ENCODE measurements at regions of chr4 and their contacts with region 1.

Region 1: DNA sequence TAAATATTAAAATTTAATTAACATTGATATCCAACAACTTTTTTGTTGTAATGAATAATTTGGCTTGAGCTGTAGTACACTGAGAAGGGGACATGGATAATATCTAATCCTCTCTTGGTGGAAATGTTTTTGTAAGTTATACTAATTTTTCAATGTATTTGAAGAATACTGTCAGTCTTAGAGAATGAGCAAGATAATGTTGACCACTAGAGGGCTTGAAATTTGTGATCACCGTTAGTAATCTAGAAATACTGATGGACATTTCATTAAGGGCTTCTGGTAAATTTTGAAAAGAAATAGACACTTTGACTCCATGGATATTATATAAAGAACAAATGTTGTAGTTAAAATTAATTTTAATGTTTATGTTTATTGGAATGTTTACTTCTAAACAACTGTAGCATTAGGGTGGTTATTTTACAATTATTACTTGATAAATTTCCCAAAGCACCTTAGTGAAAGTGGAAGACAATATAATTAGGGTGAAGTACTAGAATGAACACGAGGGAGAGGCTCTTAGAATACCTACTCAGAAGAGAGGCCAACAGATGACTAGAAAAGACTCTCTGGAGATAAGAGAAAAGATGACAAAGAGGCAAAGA is 20.0 kb upstream of the CAMK2D start:
- DNase-seq: peak; percentile 58
- H3K4me3 ChIP-seq: no peak overlapping the region
- H3K27ac ChIP-seq: no peak overlapping the region
- H3K4me1 ChIP-seq: peaks cover 19% of the 10 kb centered on the region
- H3K27me3 ChIP-seq: no peaks in the 10 kb centered on the region
- CTCF ChIP-seq: peak; percentile 32 to 40
- POLR2A ChIP-seq: no peak

Region 2: DNA sequence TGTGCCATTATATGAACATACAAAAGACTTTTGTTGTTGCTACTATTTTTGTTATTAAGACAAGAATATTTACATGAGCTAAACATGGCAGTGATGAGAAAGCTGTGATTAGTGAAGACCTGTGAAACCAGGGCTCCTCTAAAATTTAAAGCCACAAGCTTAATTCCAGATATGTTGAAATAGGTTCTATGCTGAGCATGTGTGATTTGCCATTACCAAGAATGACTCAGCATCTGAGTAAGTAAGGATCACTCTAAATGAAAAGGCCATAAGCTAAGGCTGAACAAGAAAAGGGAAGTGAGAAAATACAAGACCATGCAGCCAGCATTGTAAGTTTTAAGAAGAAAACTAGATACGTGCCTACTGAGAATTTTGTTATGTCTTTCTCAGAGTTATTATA is 55.9 kb after region 1 on chr4:
- CTCF ChIA-PET with region 1: interaction called, 6 read pairs
- POLR2A ChIA-PET with region 1: no interaction called
- dilution Hi-C with region 1: no loop called
- intact Hi-C with region 1: loop called (anchors 5 kb)
- DNase-seq: peak; percentile 51
- H3K4me3 ChIP-seq: no peak overlapping the region
- H3K27ac ChIP-seq: no peak overlapping the region
- H3K4me1 ChIP-seq: peaks cover 20% of the 10 kb centered on the region
- H3K27me3 ChIP-seq: no peaks in the 10 kb centered on the region
- CTCF ChIP-seq: no peak
- POLR2A ChIP-seq: no peak

Region 3: GRCh38 chr4:113958766-113959538 is 177.4 kb after region 1 on chr4:
- CTCF ChIA-PET with region 1: interaction called, 3 read pairs
- POLR2A ChIA-PET with region 1: no interaction called
- dilution Hi-C with region 1: no loop called
- intact Hi-C with region 1: loop called (anchors 5 kb)
- DNase-seq: peak; percentile 95
- H3K4me3 ChIP-seq: peak overlapping the region in 2 of 3 experiments; percentile 10 to 83
- H3K27ac ChIP-seq: peak overlapping the region; percentile 89
- H3K4me1 ChIP-seq: peaks cover 69% of the 10 kb centered on the region
- H3K27me3 ChIP-seq: no peaks in the 10 kb centered on the region
- CTCF ChIP-seq: no peak
- POLR2A ChIP-seq: peak; percentile 70

Region 4: GRCh38 chr4:114077610-114078009 is 296.1 kb after region 1 on chr4:
- CTCF ChIA-PET with region 1: no interaction called
- POLR2A ChIA-PET with region 1: no interaction called
- dilution Hi-C with region 1: no loop called
- intact Hi-C with region 1: loop called (anchors 2 kb)
- DNase-seq: peak; percentile 92
- H3K4me3 ChIP-seq: no peak overlapping the region
- H3K27ac ChIP-seq: peak overlapping the region; percentile 58
- H3K4me1 ChIP-seq: peaks cover 13% of the 10 kb centered on the region
- H3K27me3 ChIP-seq: no peaks in the 10 kb centered on the region
- CTCF ChIP-seq: no peak
- POLR2A ChIP-seq: no peak

Region 5: GRCh38 chr4:114378306-114378903 is 596.9 kb after region 1 on chr4:
- CTCF ChIA-PET with region 1: interaction called, 18 read pairs
- POLR2A ChIA-PET with region 1: no interaction called
- dilution Hi-C with region 1: no loop called
- intact Hi-C with region 1: loop called (anchors 1 kb)
- DNase-seq: peak; percentile 37
- H3K4me3 ChIP-seq: no peak overlapping the region
- H3K27ac ChIP-seq: no peak overlapping the region
- H3K4me1 ChIP-seq: no peaks in the 10 kb centered on the region
- H3K27me3 ChIP-seq: peaks cover 0 to 2% of the 10 kb centered on the region in 2 experiments
- CTCF ChIP-seq: peak in 1 of 2 donors; percentile 21
- POLR2A ChIP-seq: no peak

Region 6: DNA sequence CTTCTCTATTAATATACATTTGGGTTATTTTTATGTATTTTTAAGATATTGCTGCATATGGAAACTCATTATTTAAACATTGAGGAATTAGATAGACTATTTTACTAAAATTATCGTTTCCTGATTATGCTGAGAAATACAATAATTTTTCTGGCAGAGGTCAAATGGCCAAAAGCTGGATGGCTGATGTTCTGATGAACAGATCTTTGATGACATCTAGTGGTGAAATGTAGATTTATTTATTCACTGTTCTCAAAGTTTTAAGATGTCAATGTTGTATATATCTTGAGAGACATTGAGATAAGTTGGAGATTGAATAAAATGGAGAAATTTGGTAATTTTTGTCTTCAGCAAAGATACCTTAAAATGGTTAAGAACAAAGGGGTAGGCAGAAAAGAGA is 913.2 kb after region 1 on chr4:
- CTCF ChIA-PET with region 1: no interaction called
- POLR2A ChIA-PET with region 1: no interaction called
- dilution Hi-C with region 1: no loop called
- intact Hi-C with region 1: loop called (anchors 10 kb)
- DNase-seq: peak; percentile 58
- H3K4me3 ChIP-seq: no peak overlapping the region
- H3K27ac ChIP-seq: no peak overlapping the region
- H3K4me1 ChIP-seq: peaks cover 4% of the 10 kb centered on the region
- H3K27me3 ChIP-seq: peaks cover 0 to 1% of the 10 kb centered on the region in 2 experiments
- CTCF ChIP-seq: peak; percentile 16
- POLR2A ChIP-seq: no peak